GM13977 (cell line): ENCODE measurements at regions of chr21 and their contacts with region 1.

Region 1: GRCh38 chr21:36149788-36150711 is 6.6 kb upstream of the DOP1B start:
- DNase-seq: no peak
- CTCF ChIP-seq: no peak

Region 2: GRCh38 chr21:35045542-35046262 is 1104.3 kb before region 1 on chr21:
- in situ Hi-C with region 1: no loop called
- DNase-seq: no peak
- CTCF ChIP-seq: no peak

Region 3: GRCh38 chr21:36337099-36337509 is 187.1 kb after region 1 on chr21:
- in situ Hi-C with region 1: loop called (anchors 5 kb)
- DNase-seq: no peak
- CTCF ChIP-seq: no peak